GM13976 (cell line): ENCODE measurements at regions of chr10 and their contacts with region 1.

Region 1: GRCh38 chr10:80453701-80454513 is at the start of gene TSPAN14:
- DNase-seq: peak; percentile 93
- CTCF ChIP-seq: no peak

Region 2: GRCh38 chr10:80126876-80127275 is 327.0 kb before region 1 on chr10:
- in situ Hi-C with region 1: no loop called
- DNase-seq: no peak
- CTCF ChIP-seq: no peak

Region 3: DNA sequence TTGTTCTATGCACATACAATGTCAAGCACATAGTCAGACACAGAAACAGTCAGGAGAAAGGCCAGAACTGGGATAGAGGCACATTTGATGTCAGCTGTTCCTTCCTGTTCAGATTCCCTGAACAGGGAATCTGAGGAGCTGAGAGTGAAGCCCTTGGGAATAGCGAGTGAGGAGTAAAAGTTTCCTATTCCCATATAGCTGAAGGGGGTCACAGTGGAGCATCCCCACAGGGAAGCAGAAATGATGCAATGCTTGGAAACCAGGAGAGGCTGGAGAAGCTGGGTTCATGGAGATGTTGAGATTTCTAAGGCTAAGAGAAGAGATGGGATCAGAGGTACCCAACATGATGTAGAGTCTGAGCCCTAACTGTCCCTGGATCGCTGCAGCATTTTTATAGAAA is 56.9 kb before region 1 on chr10:
- in situ Hi-C with region 1: no loop called
- DNase-seq: no peak
- CTCF ChIP-seq: no peak

Region 4: DNA sequence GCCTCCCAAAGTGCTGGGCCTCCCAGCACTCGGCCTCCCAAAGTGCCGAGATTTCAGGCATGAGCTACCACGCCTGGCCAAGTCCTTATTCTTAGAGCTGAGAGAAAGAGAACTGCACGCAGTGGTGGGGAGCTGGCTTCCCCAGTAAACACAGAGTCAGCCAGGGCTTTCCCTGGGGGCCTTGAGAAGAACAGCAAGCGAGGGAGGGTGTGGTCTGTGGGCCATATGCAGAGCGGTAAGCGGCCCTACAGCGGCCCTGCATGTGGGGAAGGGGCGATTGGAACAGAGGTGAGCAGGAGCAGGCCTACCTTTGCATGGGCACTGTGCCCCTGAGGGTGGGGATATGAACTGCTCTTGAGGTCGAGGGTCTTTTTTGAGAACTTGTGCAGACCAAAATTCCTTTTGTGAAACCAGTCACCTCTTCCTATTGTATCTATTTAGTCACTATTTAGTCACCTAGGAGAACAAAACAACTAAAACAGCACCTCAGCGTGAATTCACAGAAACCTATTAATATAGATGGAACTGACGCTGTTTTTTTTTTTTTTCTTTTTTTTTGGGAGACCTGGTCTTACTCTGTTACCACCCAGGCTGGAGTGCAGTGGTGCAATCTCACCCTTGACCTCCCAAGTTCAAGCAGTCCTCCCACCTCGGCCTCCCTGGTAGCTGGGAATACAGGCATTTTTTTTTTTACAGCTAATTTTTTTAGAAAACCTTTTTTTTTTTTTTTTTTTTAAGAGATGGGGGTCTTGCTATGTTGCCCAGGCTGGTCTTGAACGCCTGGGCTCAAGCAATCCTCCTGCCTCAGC is 46.9 kb after region 1 on chr10:
- in situ Hi-C with region 1: loop called (anchors 5 kb)
- DNase-seq: peak; percentile 61
- CTCF ChIP-seq: no peak

Region 5: DNA sequence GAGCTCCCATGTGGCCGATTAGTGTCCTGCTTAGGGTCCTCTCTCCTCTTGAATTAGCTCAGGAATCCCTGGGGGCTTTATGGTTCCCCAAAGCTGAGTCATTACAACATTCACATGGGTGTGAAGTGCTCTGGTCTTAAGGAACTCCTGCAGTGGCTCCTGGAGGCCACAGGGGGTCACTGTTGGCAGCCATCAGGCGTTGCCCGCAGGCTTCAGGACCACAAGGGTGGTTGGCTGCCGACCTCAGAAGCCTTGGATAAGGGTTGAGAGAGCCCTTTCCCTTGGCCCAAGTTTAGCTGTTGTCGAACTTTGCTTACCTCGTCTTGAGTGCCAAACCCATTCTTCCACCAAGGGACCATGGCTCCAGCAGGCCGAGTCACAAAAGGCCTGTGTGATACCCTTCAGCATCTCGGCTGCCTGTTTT is 145.5 kb after region 1 on chr10:
- in situ Hi-C with region 1: loop called (anchors 10 kb)
- DNase-seq: peak; percentile 75
- CTCF ChIP-seq: peak; percentile 85